HepG2 (cell line): ENCODE measurements at regions of chr16 and their contacts with region 1.

Region 1: DNA sequence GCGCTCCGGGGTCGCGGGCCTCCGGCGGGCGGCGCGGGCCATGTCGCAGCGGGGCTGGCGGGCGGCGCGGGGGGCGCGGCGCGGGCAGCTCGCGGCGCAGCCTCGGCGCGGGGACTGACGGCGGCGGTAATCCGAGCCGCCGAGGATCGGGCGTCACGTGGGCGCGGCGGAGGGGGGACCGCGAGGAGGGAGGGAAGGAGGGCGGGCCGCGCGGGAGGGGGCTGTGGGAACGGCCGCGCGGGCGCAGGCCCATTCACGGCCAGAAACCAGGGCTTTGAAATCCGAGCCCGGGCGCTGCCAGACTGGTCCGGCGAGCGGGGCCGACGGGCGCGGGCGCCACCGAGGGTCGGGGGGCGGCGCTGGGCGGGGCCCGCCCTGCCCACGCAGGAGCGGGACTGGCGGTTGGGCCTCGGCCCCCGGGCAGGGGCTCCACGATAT is at the start of gene MTSS2:
- DNase-seq: peak; percentile 80
- ATAC-seq: peak; percentile 16
- H3K4me3 ChIP-seq: peak within 1 kb of the TSS; percentile 86 to 93 (median 91)
- H3K27ac ChIP-seq: peak within 1 kb of the TSS; percentile 91
- H3K4me1 ChIP-seq: peaks cover 80% of the 10 kb centered on the region
- H3K27me3 ChIP-seq: no peaks in the 10 kb centered on the region; a peak in 1 of 5 replicates
- CTCF ChIP-seq: no peak
- EP300 ChIP-seq: peak in 1 of 2 experiments; percentile 54; a peak in 2 of 4 replicates
- POLR2A ChIP-seq: peak in 1 of 2 experiments; percentile 18; a peak in 1 of 4 replicates
- RAD21 ChIP-seq: peak; percentile 67
- total RNA-seq, gene MTSS2: 84.6 and 132 TPM in 2 replicates

Region 2: DNA sequence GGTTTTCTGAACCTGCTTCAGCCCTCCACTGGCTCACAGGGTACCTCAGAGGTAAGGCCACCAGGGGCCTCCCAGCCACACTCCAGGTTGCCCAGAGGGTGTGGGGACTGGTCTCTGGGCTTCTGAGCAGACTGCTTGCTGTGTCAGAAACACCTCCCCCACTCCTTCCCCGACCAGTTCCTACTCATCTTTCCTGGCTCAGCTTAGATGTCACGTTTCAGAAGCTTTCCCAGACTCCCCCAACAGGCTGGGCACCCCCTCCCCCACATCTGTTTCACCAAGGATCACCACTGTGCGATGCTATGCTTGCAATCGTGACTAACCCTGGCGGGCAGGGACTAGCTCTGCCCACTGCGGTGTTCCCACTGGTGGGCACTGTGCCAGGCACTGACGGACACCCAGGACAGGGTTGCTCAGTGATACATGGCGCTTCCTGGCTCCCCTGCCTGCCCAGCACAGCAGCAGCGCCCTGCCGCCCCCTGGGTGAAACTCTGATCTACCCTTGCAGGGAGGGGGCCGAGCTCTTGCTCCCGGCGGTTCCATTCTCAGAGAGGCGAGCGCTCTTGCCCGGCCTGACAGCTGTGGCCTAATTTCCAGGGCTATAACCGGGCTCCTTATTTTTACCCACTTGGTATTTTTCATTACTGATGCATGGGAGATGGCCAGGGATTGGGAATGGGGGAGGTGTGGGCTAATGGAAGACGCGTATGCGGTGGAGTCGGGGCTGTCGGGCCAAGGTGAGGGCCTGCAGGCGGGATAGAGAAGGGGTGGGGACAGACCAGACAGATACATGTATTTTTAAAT is 29.3 kb after region 1 on chr16:
- CTCF ChIA-PET with region 1: no interaction called
- POLR2A ChIA-PET with region 1: interaction called, 69 read pairs
- in situ Hi-C with region 1: no loop called
- intact Hi-C with region 1: no loop called
- DNase-seq: no peak
- ATAC-seq: no peak
- H3K4me3 ChIP-seq: no peak overlapping the region
- H3K27ac ChIP-seq: no peak overlapping the region
- H3K4me1 ChIP-seq: peaks cover 64% of the 10 kb centered on the region
- H3K27me3 ChIP-seq: no peaks in the 10 kb centered on the region
- CTCF ChIP-seq: no peak
- EP300 ChIP-seq: no peak
- POLR2A ChIP-seq: no peak
- RAD21 ChIP-seq: no peak

Region 3: DNA sequence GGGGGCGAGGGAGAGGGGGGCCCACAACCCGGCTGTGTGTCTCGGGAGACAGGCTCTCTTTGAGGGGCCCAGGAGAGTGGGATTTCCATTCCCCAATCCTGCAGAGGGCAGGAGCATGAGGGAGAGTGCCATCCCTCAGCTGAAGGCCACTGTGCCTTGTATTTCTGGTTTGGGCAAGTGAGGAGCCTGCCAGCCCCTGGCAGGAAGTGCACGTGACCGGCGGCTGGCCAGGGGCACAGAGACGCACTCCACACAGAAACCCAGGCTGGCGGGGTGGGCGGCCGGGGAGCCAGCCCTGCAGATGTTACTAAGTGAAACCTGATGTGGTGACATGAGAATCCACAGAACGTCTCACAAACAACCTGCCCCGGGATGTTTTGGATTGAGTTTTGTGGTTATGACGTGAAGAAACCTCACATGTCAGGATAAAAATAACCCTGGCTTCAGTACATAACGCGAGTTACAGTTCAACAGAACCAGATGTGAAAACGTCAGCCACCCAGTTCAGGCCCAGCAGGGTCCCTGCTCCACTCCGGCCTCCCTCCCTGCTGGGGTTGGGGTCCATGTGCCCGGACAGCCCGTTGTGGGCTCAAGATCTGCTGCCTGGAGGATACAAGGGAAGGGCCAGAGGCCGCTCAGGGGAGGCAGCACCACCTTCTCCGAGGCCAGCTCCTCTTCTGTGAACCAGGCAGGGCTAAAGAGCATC is 51.6 kb after region 1 on chr16:
- CTCF ChIA-PET with region 1: interaction called, 19 read pairs
- POLR2A ChIA-PET with region 1: interaction called, 115 read pairs
- in situ Hi-C with region 1: no loop called
- intact Hi-C with region 1: loop called (anchors 1 kb)
- DNase-seq: no peak
- ATAC-seq: no peak
- H3K4me3 ChIP-seq: no peak overlapping the region
- H3K27ac ChIP-seq: peak overlapping the region; percentile 11
- H3K4me1 ChIP-seq: peaks cover 59% of the 10 kb centered on the region
- H3K27me3 ChIP-seq: no peaks in the 10 kb centered on the region
- CTCF ChIP-seq: no peak
- EP300 ChIP-seq: no peak
- POLR2A ChIP-seq: no peak
- RAD21 ChIP-seq: no peak